PC-3 (cell line): ENCODE measurements at regions of chr16 and their contacts with region 1.

Region 1: DNA sequence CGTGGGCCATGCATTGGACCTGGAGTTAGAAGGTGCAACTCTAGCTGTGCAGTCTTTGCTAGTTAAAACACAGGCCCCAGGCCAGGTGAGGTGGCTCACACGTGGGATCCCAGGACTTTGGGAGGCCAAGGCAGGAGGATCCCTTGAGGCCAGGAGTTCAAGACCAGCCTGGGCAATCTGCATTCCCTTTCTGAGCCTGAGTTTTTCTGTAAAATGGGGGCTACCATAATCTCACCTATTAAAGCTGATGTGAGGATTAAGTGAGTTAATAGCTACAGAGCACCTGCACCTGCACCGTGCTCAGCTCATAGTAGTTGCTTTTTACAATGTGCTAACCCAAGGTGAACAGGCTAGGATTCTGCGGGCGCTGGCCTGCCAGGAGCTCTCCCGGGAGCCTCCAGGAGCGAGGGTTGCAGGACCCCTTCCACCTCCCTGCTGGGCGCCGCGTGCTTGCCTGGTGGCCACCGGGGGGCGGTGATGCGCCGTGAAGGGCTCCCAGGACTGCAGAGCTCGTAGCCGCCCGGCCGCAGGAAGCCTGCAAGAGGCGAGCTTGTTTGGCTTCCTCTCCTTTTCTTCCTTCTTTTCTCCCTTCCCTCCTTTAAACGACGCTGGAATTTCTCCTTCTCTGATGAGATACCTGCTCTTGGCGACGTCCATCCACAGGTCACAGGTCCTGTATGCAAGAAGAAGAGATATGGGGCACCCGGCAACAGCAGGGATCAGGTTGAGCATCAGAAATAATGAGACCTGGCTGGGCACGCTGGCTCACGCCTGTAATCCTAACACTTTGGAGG is 51.3 kb downstream of the ZFP90 start:
- DNase-seq: peak; percentile 67
- ATAC-seq: peak; percentile 100
- H3K4me3 ChIP-seq: peak overlapping the region; percentile 40; the same call in 1 of the 2 replicates
- H3K27ac ChIP-seq: no peak overlapping the region
- H3K4me1 ChIP-seq: peaks cover 2% of the 10 kb centered on the region; the same call in 1 of the 2 replicates
- H3K27me3 ChIP-seq: no peaks in the 10 kb centered on the region
- CTCF ChIP-seq: peak; percentile 81

Region 2: GRCh38 chr16:68528686-68529379 is 61.6 kb before region 1 on chr16:
- CTCF ChIA-PET with region 1: interaction called, 8 read pairs
- POLR2A ChIA-PET with region 1: no interaction called
- intact Hi-C with region 1: loop called (anchors 5 kb)
- DNase-seq: peak; percentile 69
- ATAC-seq: peak; percentile 71
- H3K4me3 ChIP-seq: peak overlapping the region; percentile 85
- H3K27ac ChIP-seq: no peak overlapping the region
- H3K4me1 ChIP-seq: peaks cover 12% of the 10 kb centered on the region
- H3K27me3 ChIP-seq: no peaks in the 10 kb centered on the region
- CTCF ChIP-seq: peak; percentile 78

Region 3: DNA sequence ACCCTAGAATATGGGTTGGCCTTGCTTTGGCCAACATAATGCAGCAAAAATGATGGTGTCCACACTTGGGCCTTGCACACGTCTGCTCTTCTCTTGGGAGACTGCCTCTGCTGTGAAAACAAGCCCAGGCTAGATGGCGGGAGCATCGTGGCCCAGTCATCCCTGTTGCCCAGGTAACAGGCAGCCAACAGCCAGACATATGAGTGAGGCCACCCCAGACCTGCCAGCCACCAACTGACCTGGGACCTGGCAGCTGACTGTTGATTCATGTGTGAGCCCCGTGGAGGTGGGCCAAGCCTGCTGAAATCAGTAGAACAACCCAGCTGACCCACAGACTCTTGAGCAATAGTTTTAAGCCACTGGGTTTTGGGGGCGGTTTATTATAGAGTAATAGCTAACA is 15.3 kb after region 1 on chr16:
- CTCF ChIA-PET with region 1: no interaction called
- POLR2A ChIA-PET with region 1: no interaction called
- intact Hi-C with region 1: no loop called
- DNase-seq: peak; percentile 14
- ATAC-seq: no peak
- H3K4me3 ChIP-seq: no peak overlapping the region
- H3K27ac ChIP-seq: no peak overlapping the region
- H3K4me1 ChIP-seq: no peaks in the 10 kb centered on the region
- H3K27me3 ChIP-seq: no peaks in the 10 kb centered on the region
- CTCF ChIP-seq: no peak

Region 4: GRCh38 chr16:68696514-68696913 is 106.1 kb after region 1 on chr16:
- CTCF ChIA-PET with region 1: interaction called, 3 read pairs
- POLR2A ChIA-PET with region 1: no interaction called
- intact Hi-C with region 1: loop called (anchors 5 kb)
- DNase-seq: peak; percentile 21
- ATAC-seq: peak; percentile 45; the same call in 1 of the 2 replicates
- H3K4me3 ChIP-seq: no peak overlapping the region
- H3K27ac ChIP-seq: no peak overlapping the region
- H3K4me1 ChIP-seq: no peaks in the 10 kb centered on the region
- H3K27me3 ChIP-seq: no peaks in the 10 kb centered on the region
- CTCF ChIP-seq: 0 out of 2 replicates have a peak, but pooled peaks have one; percentile 17

Region 5: DNA sequence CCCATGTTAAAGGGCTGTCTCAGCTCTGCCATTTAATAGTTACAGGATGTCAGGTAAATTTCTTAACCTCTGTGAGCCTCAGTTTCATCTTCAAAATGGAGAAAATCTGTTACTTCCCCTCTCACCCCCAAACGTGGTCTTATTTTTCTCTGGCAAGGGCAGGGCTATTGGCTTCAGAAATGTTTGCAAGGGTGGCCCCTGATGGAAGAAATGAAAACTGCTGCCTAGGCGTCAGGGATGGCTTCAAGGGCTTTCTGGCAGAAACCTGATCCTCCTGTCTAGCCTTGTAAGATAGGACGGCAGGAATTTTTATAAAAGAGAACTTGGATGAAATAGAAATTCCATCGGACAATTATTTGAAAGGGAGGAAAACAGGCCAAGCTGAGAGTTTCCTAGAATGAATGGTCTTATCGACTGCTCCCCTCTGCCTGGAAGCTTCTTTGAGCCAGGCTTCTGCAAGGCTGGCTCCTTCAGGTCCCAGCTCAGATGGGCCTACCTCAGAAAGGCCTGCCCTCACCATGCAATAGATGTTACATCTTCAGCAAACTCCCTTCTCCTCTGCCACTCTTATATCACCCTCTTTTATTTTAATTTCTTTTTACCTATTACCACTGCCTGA is 210.0 kb after region 1 on chr16:
- CTCF ChIA-PET with region 1: interaction called, 4 read pairs
- POLR2A ChIA-PET with region 1: no interaction called
- intact Hi-C with region 1: loop called (anchors 10 kb)
- DNase-seq: peak; percentile 85
- ATAC-seq: peak; percentile 92
- H3K4me3 ChIP-seq: no peak overlapping the region
- H3K27ac ChIP-seq: no peak overlapping the region
- H3K4me1 ChIP-seq: peaks cover 22% of the 10 kb centered on the region
- H3K27me3 ChIP-seq: no peaks in the 10 kb centered on the region
- CTCF ChIP-seq: peak; percentile 77